ENCODE measurements at regions of chr2 and their contacts with region 1.

Region 1: DNA sequence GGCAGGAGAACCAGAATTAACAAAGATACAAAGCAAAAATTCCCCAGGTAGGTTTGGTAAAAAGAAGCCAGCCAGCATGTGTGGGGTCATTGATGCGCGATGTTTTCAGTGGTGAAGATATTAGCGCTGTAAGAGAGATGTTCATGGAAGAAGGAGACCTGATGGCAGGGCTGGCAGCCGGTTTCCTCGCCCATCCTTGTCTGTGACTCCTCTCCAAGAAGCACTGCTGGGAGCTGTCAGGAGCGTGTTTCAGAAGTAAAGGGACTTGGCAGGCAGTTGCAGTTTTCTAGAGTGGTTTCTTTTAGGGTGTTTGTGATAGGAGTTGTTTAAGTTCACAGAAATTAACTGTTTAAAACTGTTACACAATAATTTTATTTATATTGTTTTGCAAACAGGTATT is 24.6 kb downstream of the TAF1B start:
- DNase-seq: no peak
- H3K4me3 ChIP-seq: no peak overlapping the region
- H3K27ac ChIP-seq: no peak overlapping the region
- H3K4me1 ChIP-seq: no peaks in the 10 kb centered on the region
- H3K27me3 ChIP-seq: no peaks in the 10 kb centered on the region
- CTCF ChIP-seq: no peak
- EP300 ChIP-seq: no peak
- POLR2A ChIP-seq: no peak

Region 2: GRCh38 chr2:9423100-9423921 is 444.6 kb before region 1 on chr2 and contains the starts of genes CPSF3 and ITGB1BP1:
- intact Hi-C with region 1: no loop called
- DNase-seq: peak; percentile 97 to 99 (median 98)
- H3K4me3 ChIP-seq: peak within 1 kb of the TSS; percentile 74
- H3K27ac ChIP-seq: peak within 1 kb of the TSS; percentile 66 to 90
- H3K4me1 ChIP-seq: peaks cover 6% of the 10 kb centered on the region
- H3K27me3 ChIP-seq: no peaks in the 10 kb centered on the region
- CTCF ChIP-seq: peak in 1 of 3 donors; percentile 72
- EP300 ChIP-seq: no peak
- POLR2A ChIP-seq: peak; percentile 76
- total RNA-seq, gene CPSF3: 14.8 to 24.6 (median 19.8) TPM
- total RNA-seq, gene ITGB1BP1: 14.5 to 82.2 (median 64.5) TPM

Region 3: DNA sequence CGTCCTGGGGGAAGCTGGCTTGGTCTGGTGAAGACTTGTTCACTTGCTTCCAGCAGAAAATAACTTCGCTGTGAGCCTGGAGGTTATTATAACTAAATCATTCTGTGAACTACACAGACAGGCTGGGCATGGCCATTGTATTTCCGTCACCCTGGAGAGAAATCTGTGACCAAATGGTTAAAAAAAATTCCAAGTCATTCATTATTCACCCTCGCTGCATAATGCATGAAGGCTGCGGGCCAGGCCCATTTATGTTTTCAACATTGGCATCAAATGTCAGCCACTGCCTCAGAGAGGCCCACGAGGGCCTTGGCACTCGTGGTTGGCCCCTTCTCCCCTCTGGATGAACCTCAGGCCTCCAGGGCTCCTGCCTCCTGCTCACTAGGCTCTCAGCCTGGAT is 312.3 kb after region 1 on chr2:
- intact Hi-C with region 1: loop called in 1 of 4 experiments (anchors 5 kb)
- DNase-seq: no peak
- H3K4me3 ChIP-seq: no peak overlapping the region
- H3K27ac ChIP-seq: no peak overlapping the region
- H3K4me1 ChIP-seq: no peaks in the 10 kb centered on the region
- H3K27me3 ChIP-seq: no peaks in the 10 kb centered on the region
- CTCF ChIP-seq: no peak
- EP300 ChIP-seq: no peak
- POLR2A ChIP-seq: no peak